ENCODE measurements at regions of chr5 and their contacts with region 1.

Region 1: GRCh38 chr5:141223112-141223783 is at the start of gene PCDHB14:
- DNase-seq: no peak
- ATAC-seq: peak; percentile 100
- H3K4me3 Mint-ChIP-seq: peak within 1 kb of the TSS; percentile 62
- H3K27ac Mint-ChIP-seq: peak within 1 kb of the TSS; percentile 19; the same call in 1 of the 2 replicates
- H3K4me1 Mint-ChIP-seq: peaks cover 11% of the 10 kb centered on the region
- H3K27me3 Mint-ChIP-seq: no peaks in the 10 kb centered on the region; the same call in none of the 2 replicates
- CTCF ChIP-seq: no peak
- total RNA-seq, gene PCDHB14: 2.6 to 3.5 TPM (median 2.8 TPM) in 3 replicates

Region 2: DNA sequence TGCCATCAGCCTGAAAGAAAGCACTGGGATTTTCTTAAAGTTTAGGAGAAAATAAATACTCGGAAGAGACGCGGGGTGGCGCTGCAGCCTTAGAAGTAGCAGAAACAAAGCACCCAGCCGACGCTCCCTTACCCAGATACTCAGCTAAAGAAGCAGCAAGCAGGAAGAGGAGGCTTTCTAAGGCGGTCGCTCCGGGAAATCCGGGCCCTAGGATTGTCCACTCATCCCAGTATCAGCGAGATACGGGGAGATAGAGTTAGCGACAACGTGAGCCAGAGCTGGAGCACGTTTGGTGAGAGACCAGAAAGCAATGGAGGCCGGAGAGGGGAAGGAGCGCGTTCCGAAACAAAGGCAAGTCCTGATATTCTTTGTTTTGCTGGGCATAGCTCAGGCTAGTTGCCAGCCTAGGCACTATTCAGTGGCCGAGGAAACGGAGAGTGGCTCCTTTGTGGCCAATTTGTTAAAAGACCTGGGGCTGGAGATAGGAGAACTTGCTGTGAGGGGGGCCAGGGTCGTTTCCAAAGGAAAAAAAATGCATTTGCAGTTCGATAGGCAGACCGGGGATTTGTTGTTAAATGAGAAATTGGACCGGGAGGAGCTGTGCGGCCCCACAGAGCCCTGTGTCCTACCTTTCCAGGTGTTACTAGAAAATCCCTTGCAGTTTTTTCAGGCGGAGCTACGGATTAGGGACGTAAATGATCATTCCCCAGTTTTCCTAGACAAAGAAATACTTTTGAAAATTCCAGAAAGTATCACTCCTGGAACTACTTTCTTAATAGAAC is 128.6 kb before region 1 on chr5 and contains the start of gene PCDHB2:
- CTCF ChIA-PET with region 1: interaction called, 11 read pairs
- POLR2A ChIA-PET with region 1: no interaction called
- DNase-seq: peak; percentile 83
- ATAC-seq: peak; percentile 94
- H3K4me3 Mint-ChIP-seq: peak within 1 kb of the TSS; percentile 95
- H3K27ac Mint-ChIP-seq: peak within 1 kb of the TSS; percentile 97
- H3K4me1 Mint-ChIP-seq: peaks cover 12% of the 10 kb centered on the region
- H3K27me3 Mint-ChIP-seq: no peaks in the 10 kb centered on the region
- CTCF ChIP-seq: peak; percentile 88
- total RNA-seq, gene PCDHB2: 22.9 to 26.2 TPM (median 23.1 TPM) in 3 replicates

Region 3: DNA sequence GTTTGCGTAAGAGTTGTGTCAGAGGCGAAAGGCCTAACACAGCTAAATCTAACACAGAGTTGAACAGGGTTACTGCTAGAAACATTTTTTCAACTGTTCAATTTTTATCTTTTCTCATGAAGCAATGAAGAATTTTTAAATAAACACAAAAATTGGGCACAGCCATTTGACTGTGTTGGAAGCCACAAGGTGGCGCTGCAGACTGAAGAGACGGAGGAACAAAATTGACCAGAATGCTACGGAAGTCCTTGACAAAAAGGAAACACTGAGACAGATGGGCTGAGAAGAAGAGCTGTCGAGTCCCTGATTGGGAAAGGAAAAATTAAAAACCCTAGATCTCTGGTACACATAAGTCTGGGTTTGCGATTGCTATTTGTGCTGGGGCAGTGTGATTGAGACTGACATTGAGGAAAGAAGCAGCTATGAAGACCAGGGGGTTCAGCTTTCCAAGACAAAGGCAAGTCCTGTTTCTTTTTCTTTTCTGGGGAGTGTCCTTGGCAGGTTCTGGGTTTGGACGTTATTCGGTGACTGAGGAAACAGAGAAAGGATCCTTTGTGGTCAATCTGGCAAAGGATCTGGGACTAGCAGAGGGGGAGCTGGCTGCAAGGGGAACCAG is 36.2 kb before region 1 on chr5 and contains the start of gene PCDHB9:
- CTCF ChIA-PET with region 1: interaction called, 30 read pairs
- POLR2A ChIA-PET with region 1: no interaction called
- DNase-seq: peak; percentile 71
- ATAC-seq: peak; percentile 58
- H3K4me3 Mint-ChIP-seq: peak within 1 kb of the TSS; percentile 21
- H3K27ac Mint-ChIP-seq: no peak within 1 kb of the TSS; the same call in 1 of the 2 replicates
- H3K4me1 Mint-ChIP-seq: peaks cover 15% of the 10 kb centered on the region
- H3K27me3 Mint-ChIP-seq: peaks cover 4% of the 10 kb centered on the region; the same call in 1 of the 2 replicates
- CTCF ChIP-seq: peak; percentile 49; the same call in 1 of the 2 replicates
- total RNA-seq, gene PCDHB9: 1.6 to 2.3 TPM (median 1.7 TPM) in 3 replicates

Region 4: DNA sequence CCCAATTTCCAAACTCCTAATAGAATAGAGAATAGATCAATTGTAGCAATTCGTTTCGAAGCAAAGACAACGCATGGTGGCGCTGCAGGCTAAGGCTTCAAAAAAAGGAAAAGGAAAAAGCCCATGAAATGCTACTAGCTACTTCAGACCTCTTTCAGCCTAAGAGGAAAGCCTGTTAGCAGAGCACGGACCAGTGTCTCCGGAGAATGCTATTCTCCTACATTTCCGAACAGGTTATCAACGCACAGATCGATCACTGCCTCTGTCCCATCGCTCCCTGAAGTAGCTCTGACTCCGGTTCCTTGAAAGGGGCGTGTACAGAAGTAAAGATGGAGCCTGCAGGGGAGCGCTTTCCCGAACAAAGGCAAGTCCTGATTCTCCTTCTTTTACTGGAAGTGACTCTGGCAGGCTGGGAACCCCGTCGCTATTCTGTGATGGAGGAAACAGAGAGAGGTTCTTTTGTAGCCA is 22.0 kb after region 1 on chr5 and contains the start of gene PCDHB15:
- CTCF ChIA-PET with region 1: interaction called, 56 read pairs
- POLR2A ChIA-PET with region 1: interaction called, 4 read pairs
- DNase-seq: peak; percentile 85
- ATAC-seq: peak; percentile 87
- H3K4me3 Mint-ChIP-seq: peak within 1 kb of the TSS; percentile 85
- H3K27ac Mint-ChIP-seq: peak within 1 kb of the TSS; percentile 93
- H3K4me1 Mint-ChIP-seq: peaks cover 18% of the 10 kb centered on the region
- H3K27me3 Mint-ChIP-seq: no peaks in the 10 kb centered on the region
- CTCF ChIP-seq: peak; percentile 70
- total RNA-seq, gene PCDHB15: 7.7 to 8.7 TPM (median 8.4 TPM) in 3 replicates

Region 5: GRCh38 chr5:141349917-141350619 is 126.8 kb after region 1 on chr5 and contains the start of gene PCDHGB1:
- CTCF ChIA-PET with region 1: interaction called, 27 read pairs
- POLR2A ChIA-PET with region 1: no interaction called
- DNase-seq: peak; percentile 86
- ATAC-seq: peak; percentile 96
- H3K4me3 Mint-ChIP-seq: peak within 1 kb of the TSS; percentile 72
- H3K27ac Mint-ChIP-seq: peak within 1 kb of the TSS; percentile 47; the same call in 1 of the 2 replicates
- H3K4me1 Mint-ChIP-seq: peaks cover 2% of the 10 kb centered on the region
- H3K27me3 Mint-ChIP-seq: peaks cover 3% of the 10 kb centered on the region
- CTCF ChIP-seq: peak; percentile 50
- total RNA-seq, gene PCDHGB1: 4.9 to 5.6 TPM (median 5.5 TPM) in 3 replicates

Region 6: GRCh38 chr5:141412854-141413539 is 189.7 kb after region 1 on chr5 and contains the start of gene PCDHGA10:
- CTCF ChIA-PET with region 1: interaction called, 44 read pairs
- POLR2A ChIA-PET with region 1: interaction called, 7 read pairs
- DNase-seq: peak; percentile 78
- ATAC-seq: peak; percentile 43
- H3K4me3 Mint-ChIP-seq: peak within 1 kb of the TSS; percentile 94
- H3K27ac Mint-ChIP-seq: peak within 1 kb of the TSS; percentile 51
- H3K4me1 Mint-ChIP-seq: peaks cover 27% of the 10 kb centered on the region
- H3K27me3 Mint-ChIP-seq: peaks cover 28% of the 10 kb centered on the region
- CTCF ChIP-seq: peak; percentile 71
- total RNA-seq, gene PCDHGA10: 10.7 to 11.9 TPM (median 11.0 TPM) in 3 replicates

Region 7: DNA sequence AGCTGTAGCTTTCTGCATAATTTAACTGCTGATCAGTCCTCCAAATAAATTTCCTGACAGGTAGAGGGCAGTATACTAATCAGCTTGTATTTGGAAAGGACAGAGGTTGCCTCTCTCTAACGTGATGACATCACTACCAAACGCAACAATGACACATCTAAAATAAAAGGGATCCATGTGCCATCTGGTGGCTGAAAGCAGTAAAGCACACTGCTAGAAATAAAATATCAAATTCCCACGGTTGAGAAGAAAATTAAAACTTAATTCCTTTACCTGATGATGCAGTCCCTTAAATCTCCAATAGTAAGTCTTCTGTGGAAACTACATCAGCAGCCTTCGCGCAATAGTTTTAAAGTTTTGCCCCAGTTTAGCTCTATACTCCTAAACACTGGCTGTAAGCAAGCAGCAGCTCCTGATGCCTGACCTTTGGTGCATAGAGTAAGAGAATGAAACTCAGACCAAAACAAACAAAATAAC is 341.0 kb after region 1 on chr5:
- CTCF ChIA-PET with region 1: interaction called, 44 read pairs
- POLR2A ChIA-PET with region 1: no interaction called
- DNase-seq: peak; percentile 48
- ATAC-seq: peak; percentile 56
- H3K4me3 Mint-ChIP-seq: no peak overlapping the region
- H3K27ac Mint-ChIP-seq: peak overlapping the region; percentile 94
- H3K4me1 Mint-ChIP-seq: peaks cover 35% of the 10 kb centered on the region
- H3K27me3 Mint-ChIP-seq: no peaks in the 10 kb centered on the region
- CTCF ChIP-seq: peak; percentile 94